Activated naive CD8-positive, alpha-beta T cell treated with anti-CD3 and anti-CD28 coated beads, Interleukin-2, amount 10 ng/mL, durations not matched to agents 7 days and 5 days (primary cell): ENCODE measurements at regions of chr3 and their contacts with region 1.

Region 1: DNA sequence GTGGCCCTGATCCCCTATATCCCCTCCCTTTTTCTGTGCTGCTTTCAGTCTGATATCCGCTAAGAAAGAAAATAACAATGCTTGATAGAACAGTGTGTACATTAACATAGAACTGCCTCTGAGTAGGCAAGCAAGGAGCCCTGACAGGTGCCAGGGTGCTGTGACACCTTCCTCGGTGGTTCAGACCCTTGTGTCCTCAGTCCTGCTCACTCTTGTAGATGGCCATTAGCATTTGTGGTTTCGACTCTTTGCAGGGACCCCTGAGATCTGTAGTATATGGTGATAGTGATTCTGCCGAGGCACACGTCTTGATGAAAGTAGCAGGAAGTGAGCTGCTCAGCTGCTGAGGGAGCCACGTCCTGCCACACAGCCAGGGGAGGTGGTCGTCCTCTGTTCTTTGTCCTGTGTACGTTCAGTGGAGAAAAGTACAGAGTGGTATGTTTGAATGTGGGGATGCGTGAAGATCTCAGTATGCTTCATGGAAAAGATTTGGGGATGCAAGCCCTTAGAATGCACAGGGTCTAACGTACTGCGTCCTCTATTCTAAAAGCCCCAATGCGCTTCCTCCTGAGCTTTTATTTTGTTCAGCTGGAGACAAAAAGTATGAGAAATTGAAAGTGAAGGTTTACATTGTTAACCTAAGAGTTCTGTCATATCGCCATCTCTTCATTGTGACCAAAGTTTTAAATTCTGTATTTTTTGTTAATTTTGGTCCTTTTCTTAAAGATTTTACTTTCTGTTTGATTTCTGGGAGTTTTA is 35.4 kb downstream of the PXYLP1 start:
- DNase-seq: peak; percentile 60
- ATAC-seq: peak; percentile 94
- H3K4me3 Mint-ChIP-seq: peak overlapping the region; percentile 84
- H3K27ac Mint-ChIP-seq: peak overlapping the region; percentile 98
- H3K4me1 Mint-ChIP-seq: peaks cover 25% of the 10 kb centered on the region
- H3K27me3 Mint-ChIP-seq: no peaks in the 10 kb centered on the region

Region 2: GRCh38 chr3:141174674-141175073 is 92.3 kb before region 1 on chr3:
- POLR2A ChIA-PET with region 1: no interaction called
- DNase-seq: no peak
- ATAC-seq: no peak
- H3K4me3 Mint-ChIP-seq: no peak overlapping the region
- H3K27ac Mint-ChIP-seq: no peak overlapping the region
- H3K4me1 Mint-ChIP-seq: no peaks in the 10 kb centered on the region
- H3K27me3 Mint-ChIP-seq: peaks cover 20% of the 10 kb centered on the region

Region 3: DNA sequence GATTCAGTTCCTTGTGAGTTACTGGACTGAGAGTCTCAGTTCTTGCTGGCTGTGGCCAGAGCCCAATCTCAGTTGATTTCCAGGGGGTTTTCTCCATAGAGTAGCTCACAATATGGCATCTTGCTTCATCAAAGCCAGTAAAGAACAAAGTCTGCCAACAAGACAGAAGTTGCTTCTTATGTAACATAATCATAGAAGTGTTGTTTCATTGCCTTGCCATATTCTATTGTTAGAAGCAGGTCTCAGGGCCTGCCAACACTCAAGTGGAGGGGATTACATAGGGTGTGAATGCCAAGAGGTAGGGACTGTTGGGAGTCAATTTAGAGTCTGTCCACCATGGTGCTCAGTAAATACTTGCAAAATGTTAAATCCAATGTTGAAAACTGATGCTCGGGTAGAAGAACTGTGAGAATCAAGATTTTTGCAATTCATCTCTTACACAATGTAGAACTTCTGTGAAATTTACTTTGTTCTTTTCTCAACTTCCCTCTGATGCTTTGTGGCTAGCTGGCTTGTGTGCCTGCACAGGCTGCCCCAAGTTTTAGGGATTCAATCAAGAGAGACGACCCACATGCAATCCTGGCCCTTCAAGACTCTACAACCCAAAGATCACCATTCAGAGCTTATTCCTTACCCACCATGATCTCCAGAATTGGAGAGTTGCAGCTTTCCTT is 48.7 kb before region 1 on chr3:
- POLR2A ChIA-PET with region 1: no interaction called
- DNase-seq: no peak
- ATAC-seq: no peak
- H3K4me3 Mint-ChIP-seq: no peak overlapping the region
- H3K27ac Mint-ChIP-seq: no peak overlapping the region
- H3K4me1 Mint-ChIP-seq: no peaks in the 10 kb centered on the region
- H3K27me3 Mint-ChIP-seq: peaks cover 4% of the 10 kb centered on the region

Region 4: GRCh38 chr3:141237701-141238521 is 29.1 kb before region 1 on chr3:
- POLR2A ChIA-PET with region 1: interaction called, 85 read pairs
- DNase-seq: no peak
- ATAC-seq: peak; percentile 62
- H3K4me3 Mint-ChIP-seq: peak overlapping the region; percentile 51
- H3K27ac Mint-ChIP-seq: peak overlapping the region; percentile 78
- H3K4me1 Mint-ChIP-seq: peaks cover 72% of the 10 kb centered on the region
- H3K27me3 Mint-ChIP-seq: no peaks in the 10 kb centered on the region

Region 5: DNA sequence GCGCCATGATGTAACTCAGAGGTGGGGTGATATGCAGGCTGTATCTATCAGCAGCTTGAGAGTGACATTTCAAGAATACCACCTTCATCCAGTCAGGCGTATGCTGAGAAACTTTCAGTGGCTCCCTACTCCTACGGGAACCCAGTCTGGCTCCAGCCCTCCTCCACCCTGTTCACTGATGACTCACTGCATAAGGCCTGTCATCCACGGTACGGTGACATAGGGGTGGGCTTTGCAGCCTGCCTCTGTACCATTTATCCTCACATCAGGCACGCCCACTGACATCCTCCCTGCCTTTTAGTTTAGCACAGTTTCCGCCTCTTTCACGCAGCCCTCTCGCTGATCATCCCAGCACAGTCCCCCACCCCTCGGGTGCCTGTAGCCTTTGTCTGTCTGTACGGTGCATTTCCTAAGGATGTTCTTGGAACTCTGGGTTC is 23.7 kb before region 1 on chr3:
- POLR2A ChIA-PET with region 1: interaction called, 15 read pairs
- DNase-seq: peak; percentile 57
- ATAC-seq: peak; percentile 99
- H3K4me3 Mint-ChIP-seq: peak overlapping the region; percentile 69
- H3K27ac Mint-ChIP-seq: peak overlapping the region; percentile 83
- H3K4me1 Mint-ChIP-seq: peaks cover 38% of the 10 kb centered on the region
- H3K27me3 Mint-ChIP-seq: no peaks in the 10 kb centered on the region

Region 6: GRCh38 chr3:141255846-141256261 is 11.1 kb before region 1 on chr3:
- POLR2A ChIA-PET with region 1: interaction called, 14 read pairs
- DNase-seq: no peak
- ATAC-seq: peak; percentile 94
- H3K4me3 Mint-ChIP-seq: no peak overlapping the region
- H3K27ac Mint-ChIP-seq: no peak overlapping the region
- H3K4me1 Mint-ChIP-seq: peaks cover 13% of the 10 kb centered on the region
- H3K27me3 Mint-ChIP-seq: no peaks in the 10 kb centered on the region

Region 7: DNA sequence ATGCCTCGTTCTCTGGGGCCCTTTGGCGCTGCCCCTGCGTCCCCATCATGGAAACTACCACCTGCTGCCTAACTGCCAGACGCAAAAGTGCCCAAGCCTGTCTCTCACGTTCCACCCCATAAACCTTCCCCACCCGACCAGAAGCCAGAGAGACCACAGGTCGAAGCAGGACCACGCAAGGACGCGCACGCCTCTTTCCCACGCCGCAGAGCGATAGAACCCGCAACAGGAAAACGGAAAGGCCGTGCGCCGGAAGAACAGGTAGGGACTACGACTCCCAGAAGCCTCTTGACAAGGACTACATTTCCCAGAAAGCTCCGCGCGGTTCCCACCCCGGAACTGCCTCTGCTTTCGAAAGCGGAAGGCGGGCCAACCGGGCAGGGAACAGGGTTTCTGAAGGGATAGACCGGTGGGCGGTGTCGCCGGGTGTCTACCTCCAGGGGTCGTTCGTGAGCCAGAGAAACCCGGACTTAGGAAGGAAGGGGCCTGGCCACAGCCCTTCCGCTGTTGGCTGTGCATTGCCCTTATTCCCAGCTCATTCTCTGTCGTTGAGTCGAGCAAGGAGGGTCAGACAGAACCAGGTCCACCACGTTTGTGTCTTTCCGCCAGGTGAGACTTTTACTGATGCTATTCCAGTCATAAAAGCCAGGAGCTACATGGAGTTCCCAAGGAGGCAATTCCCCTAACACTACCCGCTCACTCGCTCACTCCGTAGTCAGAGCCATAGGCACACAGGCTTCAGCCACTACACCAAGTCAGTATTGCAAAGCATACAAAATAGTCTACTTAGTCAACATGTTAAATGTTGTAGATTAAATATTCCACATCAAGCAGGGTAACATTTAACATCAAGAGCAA is 44.7 kb after region 1 on chr3:
- POLR2A ChIA-PET with region 1: interaction called, 13 read pairs
- DNase-seq: peak; percentile 96
- ATAC-seq: peak; percentile 93
- H3K4me3 Mint-ChIP-seq: peak overlapping the region; percentile 99
- H3K27ac Mint-ChIP-seq: peak overlapping the region; percentile 100
- H3K4me1 Mint-ChIP-seq: peaks cover 48% of the 10 kb centered on the region
- H3K27me3 Mint-ChIP-seq: no peaks in the 10 kb centered on the region

Region 8: GRCh38 chr3:141412087-141412935 is 145.3 kb after region 1 on chr3:
- POLR2A ChIA-PET with region 1: no interaction called
- DNase-seq: peak; percentile 42
- ATAC-seq: peak; percentile 39
- H3K4me3 Mint-ChIP-seq: peak overlapping the region; percentile 85
- H3K27ac Mint-ChIP-seq: peak overlapping the region; percentile 99
- H3K4me1 Mint-ChIP-seq: peaks cover 51% of the 10 kb centered on the region
- H3K27me3 Mint-ChIP-seq: no peaks in the 10 kb centered on the region